Dendritic cell treated with granulocyte-macrophage colony-stimulating factor and Interleukin-4, amounts not matched to agents 40 ng/mL and 50 ng/mL, for 4 days (primary cell): ENCODE measurements at regions of chr1 and their contacts with region 1.

Region 1: GRCh38 chr1:182446033-182446669 is 3.8 kb upstream of the RGSL1 start:
- H3K4me3 Mint-ChIP-seq: no peak overlapping the region
- H3K27ac Mint-ChIP-seq: no peak overlapping the region
- H3K4me1 Mint-ChIP-seq: no peaks in the 10 kb centered on the region
- H3K27me3 Mint-ChIP-seq: no peaks in the 10 kb centered on the region

Region 2: GRCh38 chr1:182337736-182338571 is 108.2 kb before region 1 on chr1:
- intact Hi-C with region 1: no loop called
- H3K4me3 Mint-ChIP-seq: no peak overlapping the region
- H3K27ac Mint-ChIP-seq: no peak overlapping the region
- H3K4me1 Mint-ChIP-seq: peaks cover 19% of the 10 kb centered on the region
- H3K27me3 Mint-ChIP-seq: peaks cover 4% of the 10 kb centered on the region

Region 3: GRCh38 chr1:182374101-182374834 is 71.9 kb before region 1 on chr1:
- intact Hi-C with region 1: no loop called
- H3K4me3 Mint-ChIP-seq: no peak overlapping the region
- H3K27ac Mint-ChIP-seq: no peak overlapping the region
- H3K4me1 Mint-ChIP-seq: no peaks in the 10 kb centered on the region
- H3K27me3 Mint-ChIP-seq: no peaks in the 10 kb centered on the region

Region 4: GRCh38 chr1:182426442-182427430 is 19.4 kb before region 1 on chr1:
- intact Hi-C with region 1: no loop called
- H3K4me3 Mint-ChIP-seq: no peak overlapping the region
- H3K27ac Mint-ChIP-seq: no peak overlapping the region
- H3K4me1 Mint-ChIP-seq: peaks cover 13% of the 10 kb centered on the region
- H3K27me3 Mint-ChIP-seq: peaks cover 2% of the 10 kb centered on the region

Region 5: DNA sequence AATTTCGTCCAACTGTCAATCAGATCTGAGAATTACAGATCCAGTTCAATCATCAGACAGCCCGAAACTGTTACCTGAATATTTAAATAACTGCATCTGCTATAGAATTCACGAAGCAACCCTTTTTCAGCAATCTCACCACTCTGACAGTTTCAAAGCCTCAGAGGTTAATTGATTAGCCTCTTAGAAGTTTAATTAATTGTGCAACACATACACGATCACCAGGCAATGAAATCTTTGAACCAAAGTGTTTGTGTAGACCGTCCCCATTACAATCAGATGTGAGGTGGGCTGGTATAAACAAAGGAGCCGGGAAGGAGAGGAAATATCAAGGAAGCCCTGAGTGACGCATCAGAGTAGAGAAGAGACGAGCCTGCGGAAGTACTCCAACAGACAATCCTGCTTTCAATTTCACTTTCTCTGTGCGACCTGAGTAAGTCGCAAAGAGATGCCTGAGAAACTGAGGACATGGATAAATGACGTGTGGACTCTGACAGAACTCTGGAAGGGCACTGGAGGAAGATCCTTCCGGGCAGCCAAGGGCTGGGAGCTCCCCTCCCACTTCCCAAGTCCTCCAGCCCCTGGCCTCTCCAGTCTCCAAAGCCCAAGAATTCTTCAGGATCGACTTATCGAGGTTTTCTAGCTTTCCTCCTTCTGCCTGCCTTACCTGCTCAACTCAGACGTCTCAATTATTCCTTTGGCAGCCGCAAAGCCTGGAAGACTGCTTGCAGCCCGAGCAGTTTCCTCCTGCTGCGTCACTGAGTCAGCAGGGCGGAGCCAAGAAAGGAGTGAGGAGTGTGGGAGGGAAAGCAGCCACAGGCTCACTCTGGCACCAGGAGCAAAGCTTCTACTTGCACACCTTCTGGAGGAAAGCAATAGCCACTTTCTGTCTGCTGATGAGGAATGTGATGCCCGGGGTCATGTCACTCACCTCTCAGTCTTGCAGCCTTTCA is 142.6 kb after region 1 on chr1 and contains the start of gene RNASEL:
- intact Hi-C with region 1: loop called (anchors 10 kb)
- H3K4me3 Mint-ChIP-seq: peak within 1 kb of the TSS; percentile 100
- H3K27ac Mint-ChIP-seq: peak within 1 kb of the TSS; percentile 98
- H3K4me1 Mint-ChIP-seq: peaks cover 44% of the 10 kb centered on the region
- H3K27me3 Mint-ChIP-seq: no peaks in the 10 kb centered on the region

Region 6: DNA sequence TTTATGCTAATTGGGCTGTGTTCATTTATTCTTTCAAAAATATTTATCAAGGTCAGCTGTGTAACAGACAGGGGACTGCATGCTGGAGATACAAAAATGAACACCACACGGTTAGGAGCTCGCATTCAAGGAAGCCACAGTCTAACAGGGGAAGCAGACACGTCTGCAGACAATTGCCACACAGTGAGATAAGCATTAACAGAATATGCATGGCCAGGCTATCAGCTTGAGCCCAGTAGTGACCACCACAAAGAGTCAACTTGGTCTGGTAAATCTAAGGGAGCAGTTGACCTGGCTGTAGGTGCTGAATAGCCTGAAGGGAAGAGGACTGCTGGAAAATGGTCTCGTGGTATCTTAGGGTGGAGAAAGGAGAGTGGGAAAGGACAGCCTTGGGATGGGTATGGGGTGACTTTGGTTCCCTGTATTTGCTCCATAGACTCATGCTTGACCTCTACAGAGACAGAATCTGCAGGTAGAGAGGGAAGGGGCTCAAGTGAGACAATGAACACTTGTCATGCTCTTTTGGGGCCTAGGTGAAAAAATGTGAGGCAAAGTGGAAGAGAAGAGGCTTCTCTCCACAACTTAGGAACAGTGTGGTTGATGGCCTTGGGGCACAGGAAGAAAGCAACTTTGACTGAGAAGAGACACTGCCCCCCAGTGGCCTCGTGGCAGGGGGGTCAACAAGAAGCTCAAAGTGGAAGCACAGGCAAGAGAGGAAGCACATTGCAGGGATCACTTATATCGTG is 335.9 kb after region 1 on chr1:
- intact Hi-C with region 1: loop called (anchors 1 kb)
- H3K4me3 Mint-ChIP-seq: no peak overlapping the region
- H3K27ac Mint-ChIP-seq: no peak overlapping the region
- H3K4me1 Mint-ChIP-seq: peaks cover 17% of the 10 kb centered on the region
- H3K27me3 Mint-ChIP-seq: no peaks in the 10 kb centered on the region